WTC11 (cell line): ENCODE measurements at regions of chr5 and their contacts with region 1.

Region 1: DNA sequence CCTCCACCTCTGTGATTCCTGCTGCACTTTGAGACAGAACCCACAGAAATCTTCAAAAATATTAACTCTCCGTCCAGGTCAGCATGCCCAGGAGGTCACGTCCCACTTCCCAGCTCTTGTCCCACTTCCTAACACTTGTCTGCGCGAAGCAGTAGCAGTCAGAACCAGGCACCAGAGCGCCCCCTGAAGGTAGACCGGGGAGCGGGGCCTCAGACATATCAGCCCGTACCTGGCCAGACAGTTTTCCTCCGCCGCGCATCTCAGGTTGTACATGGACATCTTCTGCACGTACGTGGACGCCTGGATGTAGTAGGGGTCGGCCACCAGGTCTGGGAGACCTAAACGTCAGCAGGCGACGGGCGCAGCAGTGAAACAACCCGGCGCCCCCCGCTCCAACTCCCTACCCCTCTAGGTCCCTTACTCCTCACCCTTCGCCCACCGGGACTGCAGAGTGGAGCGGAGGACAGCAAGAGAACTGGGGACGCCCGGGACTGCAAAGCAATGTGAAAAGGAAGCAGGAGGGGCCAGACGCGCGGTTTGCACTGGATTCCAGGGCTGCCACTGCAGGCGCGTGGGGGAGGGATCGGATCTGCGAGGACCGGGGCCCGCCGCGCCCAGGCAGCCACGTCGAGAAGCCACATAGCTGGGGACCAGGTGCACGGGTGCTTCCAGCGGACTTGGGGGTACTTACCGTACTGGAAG is 1.2 kb downstream of the LOX start:
- DNase-seq: peak; percentile 94
- ATAC-seq: peak; percentile 81
- H3K4me3 Mint-ChIP-seq: peak overlapping the region; percentile 84
- H3K27ac Mint-ChIP-seq: no peak overlapping the region
- H3K4me1 Mint-ChIP-seq: peaks cover 24% of the 10 kb centered on the region
- H3K27me3 Mint-ChIP-seq: peaks cover 45% of the 10 kb centered on the region
- CTCF ChIP-seq: peak; percentile 82

Region 2: GRCh38 chr5:122053181-122054109 is 23.4 kb before region 1 on chr5:
- CTCF ChIA-PET with region 1: interaction called, 13 read pairs
- POLR2A ChIA-PET with region 1: no interaction called
- DNase-seq: no peak
- ATAC-seq: no peak
- H3K4me3 Mint-ChIP-seq: no peak overlapping the region
- H3K27ac Mint-ChIP-seq: no peak overlapping the region
- H3K4me1 Mint-ChIP-seq: no peaks in the 10 kb centered on the region
- H3K27me3 Mint-ChIP-seq: no peaks in the 10 kb centered on the region
- CTCF ChIP-seq: no peak

Region 3: GRCh38 chr5:122091936-122092600 is 15.3 kb after region 1 on chr5:
- CTCF ChIA-PET with region 1: interaction called, 24 read pairs
- POLR2A ChIA-PET with region 1: no interaction called
- DNase-seq: no peak
- ATAC-seq: peak; percentile 76
- H3K4me3 Mint-ChIP-seq: no peak overlapping the region
- H3K27ac Mint-ChIP-seq: no peak overlapping the region
- H3K4me1 Mint-ChIP-seq: peaks cover 12% of the 10 kb centered on the region
- H3K27me3 Mint-ChIP-seq: no peaks in the 10 kb centered on the region
- CTCF ChIP-seq: peak; percentile 30; the same call in 1 of the 2 replicates

Region 4: DNA sequence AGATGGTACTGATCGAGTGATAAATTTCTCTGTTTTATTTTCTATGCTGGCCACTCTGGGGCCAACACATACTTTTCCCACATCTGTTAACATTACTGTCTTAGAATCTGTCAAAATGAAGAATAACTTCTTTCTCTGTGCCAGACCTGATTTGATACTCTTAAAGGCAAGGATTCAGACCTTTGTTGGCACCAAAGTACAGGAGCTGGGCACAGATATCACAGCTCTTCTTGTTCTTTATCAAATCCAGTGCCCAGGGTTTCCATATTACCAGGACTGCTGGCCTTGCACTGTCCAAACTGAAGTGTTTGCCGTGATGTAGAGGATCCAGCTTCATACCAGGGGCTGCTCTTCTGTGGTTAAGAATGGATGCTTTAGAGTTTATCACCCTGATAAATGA is 73.4 kb after region 1 on chr5:
- CTCF ChIA-PET with region 1: no interaction called
- POLR2A ChIA-PET with region 1: no interaction called
- DNase-seq: no peak
- ATAC-seq: no peak
- H3K4me3 Mint-ChIP-seq: no peak overlapping the region
- H3K27ac Mint-ChIP-seq: no peak overlapping the region
- H3K4me1 Mint-ChIP-seq: peaks cover 3% of the 10 kb centered on the region; the same call in 1 of the 2 replicates
- H3K27me3 Mint-ChIP-seq: no peaks in the 10 kb centered on the region
- CTCF ChIP-seq: no peak

Region 5: DNA sequence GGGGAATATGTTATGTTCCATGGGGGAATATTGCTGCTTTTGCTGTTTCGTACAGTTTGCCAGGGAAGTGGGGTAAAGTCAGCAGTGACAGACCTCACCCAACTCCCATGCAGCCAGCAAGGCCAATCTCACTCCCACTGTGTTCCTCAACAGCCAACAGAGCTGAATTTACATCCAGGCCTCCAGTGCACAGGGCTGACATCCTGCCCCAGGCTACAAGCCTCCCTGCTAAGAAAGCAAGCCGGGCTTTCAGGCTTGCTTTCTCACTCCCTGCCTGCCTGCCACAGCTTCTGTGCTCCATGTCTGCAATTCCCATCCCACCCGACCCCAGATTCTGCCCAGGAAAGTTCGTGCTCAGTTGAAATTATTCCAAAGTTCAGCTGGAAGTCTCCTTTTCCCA is 209.7 kb after region 1 on chr5:
- CTCF ChIA-PET with region 1: no interaction called
- POLR2A ChIA-PET with region 1: no interaction called
- DNase-seq: no peak
- ATAC-seq: peak; percentile 85
- H3K4me3 Mint-ChIP-seq: no peak overlapping the region
- H3K27ac Mint-ChIP-seq: no peak overlapping the region
- H3K4me1 Mint-ChIP-seq: peaks cover 27% of the 10 kb centered on the region
- H3K27me3 Mint-ChIP-seq: no peaks in the 10 kb centered on the region; the same call in 1 of the 2 replicates
- CTCF ChIP-seq: no peak